Panc1 (cell line): ENCODE measurements at regions of chr10 and their contacts with region 1.

Region 1: GRCh38 chr10:96831867-96832720 is at the start of gene LCOR:
- DNase-seq: no peak
- ATAC-seq: peak; percentile 89
- H3K4me3 ChIP-seq: peak within 1 kb of the TSS; percentile 76 to 91
- H3K27ac ChIP-seq: peak within 1 kb of the TSS; percentile 98
- H3K4me1 ChIP-seq: peaks cover 37% of the 10 kb centered on the region
- H3K27me3 ChIP-seq: no peaks in the 10 kb centered on the region
- CTCF ChIP-seq: no peak
- total RNA-seq, gene LCOR: 58.0 TPM

Region 2: DNA sequence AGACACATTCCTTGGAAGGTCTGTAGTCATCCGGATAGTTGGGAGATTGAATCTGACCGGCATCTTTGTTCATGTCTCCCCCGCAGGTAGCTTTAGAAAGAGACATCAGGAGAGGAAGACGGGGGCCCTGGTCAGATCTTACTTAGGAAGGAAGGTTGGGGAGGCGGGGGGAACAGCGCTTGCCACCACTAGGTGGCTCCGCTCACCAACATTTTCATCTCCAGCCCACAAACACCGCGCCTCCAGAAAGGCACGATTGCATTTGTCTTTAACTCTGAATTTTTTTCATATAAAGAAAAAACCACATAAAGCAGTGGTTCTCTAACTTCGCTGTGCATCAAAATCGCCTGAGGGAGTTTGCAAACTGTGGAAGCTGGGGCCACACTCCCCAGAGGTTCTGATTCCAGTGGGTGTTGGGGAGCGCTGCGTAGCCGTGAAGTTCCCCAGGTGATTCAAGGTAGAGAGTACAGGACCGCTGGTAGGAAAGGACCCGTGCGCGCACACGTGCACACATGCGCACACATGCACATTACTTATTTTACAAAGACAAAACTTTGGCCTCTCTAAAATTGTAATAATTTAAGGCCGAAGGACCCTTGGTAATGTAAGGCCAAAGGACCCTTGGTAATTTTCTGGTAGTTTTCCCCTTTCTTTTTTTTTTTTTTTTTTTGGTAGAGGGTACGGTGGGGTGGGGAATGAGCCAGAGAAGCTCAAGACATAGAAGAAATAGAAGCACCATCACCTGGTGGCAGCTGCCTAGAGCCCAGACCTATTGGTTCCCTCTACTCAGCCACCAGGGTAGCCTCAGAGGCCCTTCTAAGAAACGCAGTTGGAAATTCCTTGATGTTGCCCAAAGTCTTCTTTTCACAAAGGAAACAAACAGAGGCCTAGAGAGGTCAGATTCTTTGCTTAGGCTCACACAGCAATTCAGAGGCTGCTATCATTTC is 435.9 kb before region 1 on chr10:
- CTCF ChIA-PET with region 1: no interaction called
- POLR2A ChIA-PET with region 1: no interaction called
- in situ Hi-C with region 1: no loop called
- intact Hi-C with region 1: loop called (anchors 2 kb)
- DNase-seq: peak; percentile 50
- ATAC-seq: peak; percentile 96
- H3K4me3 ChIP-seq: no peak overlapping the region
- H3K27ac ChIP-seq: no peak overlapping the region
- H3K4me1 ChIP-seq: no peaks in the 10 kb centered on the region
- H3K27me3 ChIP-seq: peaks cover 38% of the 10 kb centered on the region
- CTCF ChIP-seq: peak; percentile 96

Region 3: GRCh38 chr10:96765406-96766240 is 66.5 kb before region 1 on chr10:
- CTCF ChIA-PET with region 1: interaction called, 3 read pairs
- POLR2A ChIA-PET with region 1: no interaction called
- in situ Hi-C with region 1: no loop called
- intact Hi-C with region 1: loop called (anchors 2 kb)
- DNase-seq: peak; percentile 25
- ATAC-seq: peak; percentile 94
- H3K4me3 ChIP-seq: no peak overlapping the region
- H3K27ac ChIP-seq: no peak overlapping the region
- H3K4me1 ChIP-seq: no peaks in the 10 kb centered on the region
- H3K27me3 ChIP-seq: no peaks in the 10 kb centered on the region
- CTCF ChIP-seq: peak; percentile 94